ENCODE measurements at regions of chr19 and their contacts with region 1.

Region 1: GRCh38 chr19:48872182-48872883 is at the start of gene PPP1R15A:
- DNase-seq: peak; percentile 90 to 99 (median 93)
- ATAC-seq: peak; percentile 52
- H3K4me3 ChIP-seq: peak within 1 kb of the TSS; percentile 87
- H3K27ac ChIP-seq: peak within 1 kb of the TSS; percentile 94
- H3K4me1 ChIP-seq: peaks cover 23 to 42% of the 10 kb centered on the region in 2 experiments
- H3K27me3 ChIP-seq: no peaks in the 10 kb centered on the region
- CTCF ChIP-seq: no peak
- EP300 ChIP-seq: peak; percentile 77; the same call in 1 of the 2 replicates
- POLR2A ChIP-seq: peak; percentile 100
- RAD21 ChIP-seq: peak; percentile 27 to 41
- polyA plus RNA-seq, gene PPP1R15A: 0.42 to 1.3 TPM

Region 2: GRCh38 chr19:48812094-48812929 is 60.0 kb before region 1 on chr19:
- CTCF ChIA-PET with region 1: no interaction called
- POLR2A ChIA-PET with region 1: interaction called, 20 read pairs
- in situ Hi-C with region 1: no loop called
- intact Hi-C with region 1: no loop called
- DNase-seq: peak; percentile 95 to 99 (median 99)
- ATAC-seq: peak; percentile 89
- H3K4me3 ChIP-seq: peak overlapping the region; percentile 66
- H3K27ac ChIP-seq: peak overlapping the region; percentile 72
- H3K4me1 ChIP-seq: peaks cover 28 to 54% of the 10 kb centered on the region in 2 experiments
- H3K27me3 ChIP-seq: no peaks in the 10 kb centered on the region
- CTCF ChIP-seq: peak in 1 of 3 experiments; percentile 17; a peak in 1 of 6 replicates
- EP300 ChIP-seq: no peak
- POLR2A ChIP-seq: peak; percentile 78
- RAD21 ChIP-seq: no peak

Region 3: DNA sequence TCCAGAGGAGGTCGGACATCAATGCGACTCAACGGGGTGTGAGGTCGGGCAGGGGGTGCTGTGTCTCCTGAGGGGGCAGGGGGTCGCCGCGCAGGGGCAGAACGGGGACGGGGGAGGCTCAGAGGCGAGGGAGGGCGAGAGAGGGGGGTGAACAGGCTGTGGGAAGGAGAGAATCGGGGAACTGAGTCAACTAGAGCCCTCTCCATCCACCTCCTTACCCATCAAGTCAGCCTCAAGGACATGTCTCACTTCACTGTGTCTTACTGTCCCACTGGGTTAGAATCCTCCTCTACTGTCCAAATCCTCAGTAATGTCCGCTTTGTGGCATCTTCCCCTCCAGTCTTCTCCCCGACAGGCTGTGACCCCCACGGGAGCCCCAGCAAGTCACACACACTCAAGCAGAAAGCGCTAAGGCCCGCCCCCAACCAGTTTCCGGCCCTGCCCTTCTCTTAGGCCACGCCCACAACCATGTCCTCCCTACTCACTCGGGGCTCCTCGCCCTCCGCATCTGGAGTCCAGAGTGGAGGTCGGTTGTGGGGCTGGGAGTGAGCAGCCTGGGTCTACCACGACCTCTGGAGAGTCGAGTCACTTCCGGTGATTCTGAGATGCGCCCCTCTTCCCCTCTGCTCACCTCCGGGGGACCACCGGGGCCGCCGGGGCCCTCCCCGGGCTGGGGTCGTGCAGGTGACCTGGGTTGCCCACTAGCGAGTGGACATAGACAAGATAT is 13.2 kb before region 1 on chr19:
- CTCF ChIA-PET with region 1: no interaction called
- POLR2A ChIA-PET with region 1: interaction called, 96 read pairs
- in situ Hi-C with region 1: no loop called
- intact Hi-C with region 1: no loop called
- DNase-seq: peak; percentile 89 to 95 (median 90)
- ATAC-seq: peak; percentile 90
- H3K4me3 ChIP-seq: peak overlapping the region; percentile 58
- H3K27ac ChIP-seq: peak overlapping the region; percentile 81
- H3K4me1 ChIP-seq: peaks cover 20 to 43% of the 10 kb centered on the region in 2 experiments
- H3K27me3 ChIP-seq: no peaks in the 10 kb centered on the region
- CTCF ChIP-seq: no peak
- EP300 ChIP-seq: no peak
- POLR2A ChIP-seq: peak; percentile 79
- RAD21 ChIP-seq: no peak

Region 4: GRCh38 chr19:48899781-48900476 is 27.6 kb after region 1 on chr19 and contains the start of gene NUCB1:
- CTCF ChIA-PET with region 1: no interaction called
- POLR2A ChIA-PET with region 1: interaction called, 205 read pairs
- in situ Hi-C with region 1: no loop called
- intact Hi-C with region 1: loop called (anchors 2 kb)
- DNase-seq: peak; percentile 98 to 100 (median 98)
- ATAC-seq: peak; percentile 87
- H3K4me3 ChIP-seq: peak within 1 kb of the TSS; percentile 89
- H3K27ac ChIP-seq: peak within 1 kb of the TSS; percentile 77
- H3K4me1 ChIP-seq: peaks cover 27 to 69% of the 10 kb centered on the region in 2 experiments
- H3K27me3 ChIP-seq: no peaks in the 10 kb centered on the region
- CTCF ChIP-seq: peak; percentile 16 to 52 (median 45); a peak in 3 of 6 replicates
- EP300 ChIP-seq: peak; percentile 73
- POLR2A ChIP-seq: peak; percentile 75
- RAD21 ChIP-seq: peak; percentile 26 to 42
- polyA plus RNA-seq, gene NUCB1: 3.1 to 5.3 TPM

Region 5: GRCh38 chr19:48954595-48955310 is 82.4 kb after region 1 on chr19 and contains the start of gene BAX:
- CTCF ChIA-PET with region 1: no interaction called
- POLR2A ChIA-PET with region 1: interaction called, 31 read pairs
- in situ Hi-C with region 1: no loop called
- intact Hi-C with region 1: no loop called
- DNase-seq: peak; percentile 95 to 100 (median 97)
- ATAC-seq: peak; percentile 92
- H3K4me3 ChIP-seq: peak within 1 kb of the TSS; percentile 79
- H3K27ac ChIP-seq: peak within 1 kb of the TSS; percentile 77
- H3K4me1 ChIP-seq: peaks cover 31 to 38% of the 10 kb centered on the region in 2 experiments; a peak in 4 of 5 replicates
- H3K27me3 ChIP-seq: no peaks in the 10 kb centered on the region
- CTCF ChIP-seq: peak in 2 of 3 experiments; percentile 13 to 33; a peak in 2 of 6 replicates
- EP300 ChIP-seq: peak; percentile 38; the same call in 1 of the 2 replicates
- POLR2A ChIP-seq: peak; percentile 68
- RAD21 ChIP-seq: peak; percentile 4 to 34; a peak in 2 of 4 replicates
- polyA plus RNA-seq, gene BAX: 3.2 to 5.5 TPM